ENCODE measurements at regions of chr6 and their contacts with region 1.

Region 1: DNA sequence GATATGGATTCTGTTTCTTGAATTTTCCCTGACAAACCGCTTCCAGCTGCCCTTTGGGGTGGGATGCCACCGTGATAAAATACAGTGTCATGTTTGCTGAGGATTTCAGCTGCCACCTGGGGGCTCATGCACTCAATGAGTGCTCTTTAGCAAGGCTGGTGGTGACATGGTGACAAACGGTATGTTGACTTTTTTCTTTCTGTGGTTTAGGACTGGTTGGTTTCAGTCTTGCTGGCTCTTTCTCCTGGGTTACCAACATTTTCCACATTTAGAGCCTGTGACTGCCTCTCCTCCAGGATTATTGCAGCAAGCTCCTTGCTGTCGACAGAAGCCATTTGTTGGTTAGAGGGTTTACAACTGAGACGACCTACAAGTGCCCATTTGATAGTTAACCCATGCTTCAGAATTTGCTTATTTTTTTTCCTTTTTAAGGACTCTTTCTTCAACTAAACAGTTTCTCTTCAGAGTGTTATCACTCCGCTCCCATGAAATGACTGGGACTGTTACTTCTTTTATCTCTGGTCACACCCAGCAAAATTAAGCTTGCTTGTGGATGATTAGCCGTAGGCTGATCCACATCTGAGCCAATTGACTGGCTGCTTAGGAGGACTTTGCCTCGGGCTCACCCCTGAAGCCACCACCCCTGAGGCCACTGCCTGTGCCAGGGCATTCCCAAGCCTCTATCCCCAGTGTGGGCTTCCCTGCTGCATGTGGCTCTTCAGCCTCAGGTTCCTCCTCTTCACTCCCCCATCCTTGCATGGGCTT is 48.4 kb upstream of the CDYL start:
- DNase-seq: peak in 2 of 9 experiments; percentile 33 to 46
- ATAC-seq: peak; percentile 54
- H3K4me3 ChIP-seq: no peak overlapping the region
- H3K4me3 Mint-ChIP-seq: no peak overlapping the region
- H3K27ac ChIP-seq: no peak overlapping the region
- H3K27ac Mint-ChIP-seq: no peak overlapping the region
- H3K4me1 ChIP-seq: no peaks in the 10 kb centered on the region
- H3K4me1 Mint-ChIP-seq: peaks cover 8% of the 10 kb centered on the region
- H3K27me3 ChIP-seq: no peaks in the 10 kb centered on the region
- H3K27me3 Mint-ChIP-seq: peaks cover 12% of the 10 kb centered on the region
- CTCF ChIP-seq: no peak

Region 2: GRCh38 chr6:4848382-4849068 is 120.7 kb after region 1 on chr6:
- CTCF ChIA-PET with region 1: no interaction called
- POLR2A ChIA-PET with region 1: no interaction called
- intact Hi-C with region 1: loop called in 1 of 2 experiments (anchors 5 kb)
- DNase-seq: peak in 3 of 9 experiments; percentile 13 to 29 (median 24)
- ATAC-seq: no peak
- H3K4me3 ChIP-seq: no peak overlapping the region
- H3K4me3 Mint-ChIP-seq: no peak overlapping the region
- H3K27ac ChIP-seq: no peak overlapping the region
- H3K27ac Mint-ChIP-seq: peak overlapping the region; percentile 73
- H3K4me1 ChIP-seq: peaks cover 39% of the 10 kb centered on the region
- H3K4me1 Mint-ChIP-seq: peaks cover 71% of the 10 kb centered on the region
- H3K27me3 ChIP-seq: no peaks in the 10 kb centered on the region
- H3K27me3 Mint-ChIP-seq: no peaks in the 10 kb centered on the region
- CTCF ChIP-seq: no peak

Region 3: GRCh38 chr6:4936681-4937041 is 208.8 kb after region 1 on chr6:
- CTCF ChIA-PET with region 1: no interaction called
- POLR2A ChIA-PET with region 1: no interaction called
- intact Hi-C with region 1: loop called in 1 of 2 experiments (anchors 10 kb)
- DNase-seq: peak in 2 of 9 experiments; percentile 43 to 61
- ATAC-seq: no peak
- H3K4me3 ChIP-seq: no peak overlapping the region
- H3K4me3 Mint-ChIP-seq: no peak overlapping the region
- H3K27ac ChIP-seq: no peak overlapping the region
- H3K27ac Mint-ChIP-seq: no peak overlapping the region
- H3K4me1 ChIP-seq: peaks cover 22% of the 10 kb centered on the region
- H3K4me1 Mint-ChIP-seq: peaks cover 57% of the 10 kb centered on the region
- H3K27me3 ChIP-seq: no peaks in the 10 kb centered on the region
- H3K27me3 Mint-ChIP-seq: no peaks in the 10 kb centered on the region
- CTCF ChIP-seq: peak; percentile 59